ENCODE measurements at regions of chr5 and their contacts with region 1.

Region 1: DNA sequence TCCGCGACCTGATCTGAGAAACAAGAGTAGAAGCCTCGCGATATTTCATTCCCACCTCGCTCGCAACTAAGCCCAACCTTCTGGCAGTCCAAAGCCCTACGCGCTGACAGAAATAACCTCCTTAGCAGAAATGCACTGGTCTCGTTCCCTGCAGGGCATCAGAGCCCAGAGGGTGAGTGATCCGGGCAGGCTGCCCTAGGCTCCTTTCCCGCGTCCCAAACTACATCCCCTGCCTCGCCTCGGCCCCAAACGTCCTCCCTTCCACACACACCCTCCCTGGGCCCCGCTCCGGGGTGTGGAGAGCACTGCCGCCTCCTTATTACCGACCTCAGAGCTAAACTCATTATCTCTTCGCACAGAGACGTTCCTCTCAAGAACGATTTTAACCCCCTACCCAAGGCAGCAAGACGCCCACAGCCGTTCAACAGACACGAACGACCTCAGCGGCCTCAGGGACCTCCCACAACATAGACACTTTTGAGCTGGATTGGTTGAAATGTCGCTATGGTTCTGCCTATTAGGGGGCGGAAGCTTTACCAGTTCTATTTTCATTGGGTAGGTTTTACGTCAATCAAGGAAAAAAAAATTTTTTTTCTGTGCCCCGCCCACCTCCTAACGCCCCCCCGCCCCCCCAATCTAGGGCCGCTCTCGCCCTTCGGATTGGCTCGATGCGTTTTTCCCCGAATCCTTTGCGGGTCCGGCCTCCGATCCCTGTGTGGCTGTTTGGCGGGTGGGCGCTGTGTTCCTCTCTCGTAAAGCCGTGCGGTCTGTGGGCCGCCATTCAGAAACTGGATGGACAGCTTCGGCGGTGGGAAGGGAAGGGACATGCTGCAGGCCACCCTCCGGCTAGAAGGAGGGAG is at the start of gene CETN3:
- DNase-seq: peak; percentile 94
- H3K4me3 ChIP-seq: peak within 1 kb of the TSS; percentile 73
- H3K27ac ChIP-seq: peak within 1 kb of the TSS; percentile 97
- H3K4me1 ChIP-seq: no peaks in the 10 kb centered on the region
- H3K27me3 ChIP-seq: no peaks in the 10 kb centered on the region
- CTCF ChIP-seq: no peak
- total RNA-seq, gene CETN3: 18.2 to 25.7 TPM

Region 2: DNA sequence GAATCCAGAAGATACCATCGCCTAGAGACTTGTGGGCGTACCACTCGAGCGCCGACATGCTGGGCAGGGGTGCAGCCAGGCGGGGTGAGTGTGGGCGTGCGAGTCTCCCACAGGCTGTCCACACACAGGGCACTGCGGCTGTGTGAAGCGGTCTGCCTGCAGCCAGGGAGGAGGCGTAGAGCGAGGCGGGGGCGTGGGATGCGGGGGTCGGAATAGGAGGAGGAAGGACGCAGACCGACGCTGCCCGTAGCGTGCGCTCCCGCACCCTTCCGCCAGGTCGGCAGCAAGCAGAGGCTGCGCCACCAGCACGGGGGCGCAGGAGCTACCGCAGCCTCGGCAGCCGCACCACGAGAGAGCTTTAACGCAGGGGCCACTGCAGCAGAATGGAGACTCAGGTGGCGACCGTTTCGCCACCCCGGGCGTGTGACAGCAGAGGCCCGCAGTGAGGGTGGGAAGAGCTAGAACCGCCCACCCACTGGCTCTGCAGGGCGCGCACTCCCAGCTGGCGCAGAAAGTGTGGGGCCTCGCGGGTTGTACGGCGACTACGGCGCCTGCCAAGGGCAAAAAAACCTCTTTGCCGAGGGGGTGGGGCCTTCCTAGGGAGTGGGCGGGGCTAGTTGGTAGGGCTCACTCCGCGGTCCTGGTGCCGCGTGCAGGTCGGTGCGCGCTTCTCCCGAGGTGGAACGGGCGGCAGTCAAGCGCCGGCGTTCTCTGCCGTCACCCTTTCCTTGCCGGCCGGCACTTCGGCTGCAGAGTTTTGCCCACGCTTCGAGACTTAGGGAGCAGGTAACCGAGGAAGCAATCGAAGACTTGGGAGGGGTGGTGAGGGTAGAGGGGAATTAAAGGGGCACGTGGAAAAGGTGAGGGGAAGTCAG is 64.9 kb after region 1 on chr5 and contains the starts of genes MBLAC2 and POLR3G:
- intact Hi-C with region 1: loop called (anchors 5 kb)
- DNase-seq: peak; percentile 96
- H3K4me3 ChIP-seq: peak within 1 kb of the TSS; percentile 63
- H3K27ac ChIP-seq: peak within 1 kb of the TSS; percentile 93
- H3K4me1 ChIP-seq: no peaks in the 10 kb centered on the region
- H3K27me3 ChIP-seq: no peaks in the 10 kb centered on the region
- CTCF ChIP-seq: peak; percentile 34
- total RNA-seq, gene MBLAC2: 3.2 to 3.3 TPM
- total RNA-seq, gene POLR3G: 1.7 to 4.0 TPM